Endothelial cell of umbilical vein (primary cell): ENCODE measurements at regions of chr12 and their contacts with region 1.

Region 1: GRCh38 chr12:103840876-103841689 is at the start of gene NT5DC3:
- DNase-seq: peak; percentile 69
- H3K4me3 ChIP-seq: peak within 1 kb of the TSS; percentile 72 to 85 (median 75)
- H3K27ac ChIP-seq: no peak within 1 kb of the TSS
- H3K4me1 ChIP-seq: peaks cover 11% of the 10 kb centered on the region
- H3K27me3 ChIP-seq: no peaks in the 10 kb centered on the region
- CTCF ChIP-seq: no peak
- POLR2A ChIP-seq: peak; percentile 86
- total RNA-seq, gene NT5DC3: 6.4 and 6.7 TPM in 2 replicates

Region 2: DNA sequence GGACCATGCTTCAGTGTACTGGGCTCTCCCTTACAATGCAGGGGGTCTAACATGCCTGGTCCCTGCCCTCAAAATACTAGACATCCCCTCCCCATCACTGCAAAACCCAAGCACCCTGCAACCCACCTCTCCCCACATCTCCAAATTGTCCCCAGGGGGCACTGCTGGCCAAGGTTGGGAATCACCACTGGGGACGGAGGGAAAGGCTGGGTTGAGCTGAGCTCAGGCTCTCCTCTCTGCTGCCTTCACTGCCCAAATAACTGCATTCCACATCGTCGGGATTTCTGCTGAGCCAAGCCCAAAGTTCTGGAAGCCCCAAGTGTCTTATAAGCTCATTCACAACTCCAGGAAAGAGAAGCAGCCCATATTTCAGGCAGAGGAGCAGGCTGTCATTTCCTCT is 69.6 kb before region 1 on chr12:
- CTCF ChIA-PET with region 1: interaction called, 5 read pairs
- POLR2A ChIA-PET with region 1: no interaction called
- dilution Hi-C with region 1: no loop called
- intact Hi-C with region 1: loop called (anchors 1 kb)
- DNase-seq: peak; percentile 46
- H3K4me3 ChIP-seq: no peak overlapping the region
- H3K27ac ChIP-seq: no peak overlapping the region
- H3K4me1 ChIP-seq: no peaks in the 10 kb centered on the region
- H3K27me3 ChIP-seq: no peaks in the 10 kb centered on the region
- CTCF ChIP-seq: peak; percentile 56 to 70
- POLR2A ChIP-seq: no peak

Region 3: DNA sequence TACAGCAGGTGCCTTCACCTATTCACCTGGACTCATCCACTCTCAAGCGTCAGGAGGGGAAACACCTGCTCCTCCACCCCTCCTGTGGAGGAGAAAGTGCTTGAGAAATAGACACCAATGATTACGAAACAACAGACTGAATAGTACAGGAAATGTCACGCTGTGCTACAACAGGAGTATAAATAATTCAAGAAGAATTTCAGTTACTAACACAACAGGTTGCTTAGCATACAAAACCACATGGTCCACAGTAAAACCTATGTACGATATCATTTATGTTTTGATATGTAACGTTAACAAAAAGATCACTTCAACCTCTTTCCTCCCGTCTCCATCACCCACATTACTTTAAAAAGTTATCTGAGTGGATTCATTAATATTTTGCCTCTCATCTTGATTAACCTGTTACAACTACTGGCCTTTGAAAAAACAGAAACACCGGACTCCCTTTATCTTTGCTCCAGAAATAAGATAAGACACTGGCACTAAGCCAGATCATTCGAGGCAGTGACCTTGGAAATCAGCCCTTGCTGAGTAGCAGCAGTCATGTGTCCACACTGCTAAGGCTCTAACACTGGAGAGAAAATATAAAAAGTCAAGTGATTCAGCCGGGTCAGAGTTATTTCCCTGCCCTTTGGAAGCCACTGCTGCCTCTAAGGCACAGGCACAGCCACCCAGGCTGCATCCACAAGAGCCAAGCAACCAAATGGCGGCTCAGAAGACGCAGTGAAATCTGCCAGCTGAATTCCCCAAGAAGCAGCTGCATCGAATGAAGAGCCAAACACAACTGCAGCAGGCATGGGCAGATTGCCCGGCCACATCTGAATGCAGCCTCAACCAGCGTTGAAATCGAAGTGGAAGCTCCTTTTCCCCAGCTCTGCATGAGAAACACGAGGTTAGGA is 41.0 kb before region 1 on chr12:
- CTCF ChIA-PET with region 1: interaction called, 4 read pairs
- POLR2A ChIA-PET with region 1: interaction called, 8 read pairs
- dilution Hi-C with region 1: no loop called
- intact Hi-C with region 1: loop called (anchors 1 kb)
- DNase-seq: peak; percentile 85
- H3K4me3 ChIP-seq: no peak overlapping the region
- H3K27ac ChIP-seq: peak overlapping the region; percentile 10
- H3K4me1 ChIP-seq: peaks cover 26% of the 10 kb centered on the region
- H3K27me3 ChIP-seq: no peaks in the 10 kb centered on the region
- CTCF ChIP-seq: no peak
- POLR2A ChIP-seq: no peak

Region 4: DNA sequence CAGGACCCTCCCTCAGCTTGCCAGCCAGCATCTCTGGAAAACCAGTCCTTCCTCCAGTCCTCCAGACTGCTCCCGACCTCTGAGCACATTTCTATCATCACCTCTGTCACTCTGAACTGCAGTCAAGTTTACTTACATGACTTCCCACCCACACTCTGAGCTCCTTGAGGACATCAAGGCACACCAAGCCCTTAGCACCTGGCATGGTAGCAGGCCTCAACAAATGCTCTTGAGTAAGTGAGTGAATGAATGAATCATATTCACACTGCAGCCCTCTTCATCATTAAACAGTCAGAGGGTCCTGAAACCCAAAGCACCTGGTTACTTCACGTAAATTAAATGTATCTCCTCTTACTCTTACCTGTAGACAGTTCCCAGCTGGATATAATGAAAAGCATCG is 35.1 kb before region 1 on chr12:
- CTCF ChIA-PET with region 1: interaction called, 4 read pairs
- POLR2A ChIA-PET with region 1: interaction called, 8 read pairs
- dilution Hi-C with region 1: no loop called
- intact Hi-C with region 1: loop called (anchors 1 kb)
- DNase-seq: no peak
- H3K4me3 ChIP-seq: no peak overlapping the region
- H3K27ac ChIP-seq: no peak overlapping the region
- H3K4me1 ChIP-seq: peaks cover 26% of the 10 kb centered on the region
- H3K27me3 ChIP-seq: no peaks in the 10 kb centered on the region
- CTCF ChIP-seq: no peak
- POLR2A ChIP-seq: no peak

Region 5: GRCh38 chr12:104011261-104011660 is 170.2 kb after region 1 on chr12:
- CTCF ChIA-PET with region 1: no interaction called
- POLR2A ChIA-PET with region 1: no interaction called
- dilution Hi-C with region 1: no loop called
- intact Hi-C with region 1: no loop called
- DNase-seq: peak; percentile 93
- H3K4me3 ChIP-seq: no peak overlapping the region
- H3K27ac ChIP-seq: peak overlapping the region; percentile 65
- H3K4me1 ChIP-seq: peaks cover 23% of the 10 kb centered on the region
- H3K27me3 ChIP-seq: no peaks in the 10 kb centered on the region
- CTCF ChIP-seq: no peak
- POLR2A ChIP-seq: no peak